ENCODE measurements at regions of chr2 and their contacts with region 1.

Region 1: DNA sequence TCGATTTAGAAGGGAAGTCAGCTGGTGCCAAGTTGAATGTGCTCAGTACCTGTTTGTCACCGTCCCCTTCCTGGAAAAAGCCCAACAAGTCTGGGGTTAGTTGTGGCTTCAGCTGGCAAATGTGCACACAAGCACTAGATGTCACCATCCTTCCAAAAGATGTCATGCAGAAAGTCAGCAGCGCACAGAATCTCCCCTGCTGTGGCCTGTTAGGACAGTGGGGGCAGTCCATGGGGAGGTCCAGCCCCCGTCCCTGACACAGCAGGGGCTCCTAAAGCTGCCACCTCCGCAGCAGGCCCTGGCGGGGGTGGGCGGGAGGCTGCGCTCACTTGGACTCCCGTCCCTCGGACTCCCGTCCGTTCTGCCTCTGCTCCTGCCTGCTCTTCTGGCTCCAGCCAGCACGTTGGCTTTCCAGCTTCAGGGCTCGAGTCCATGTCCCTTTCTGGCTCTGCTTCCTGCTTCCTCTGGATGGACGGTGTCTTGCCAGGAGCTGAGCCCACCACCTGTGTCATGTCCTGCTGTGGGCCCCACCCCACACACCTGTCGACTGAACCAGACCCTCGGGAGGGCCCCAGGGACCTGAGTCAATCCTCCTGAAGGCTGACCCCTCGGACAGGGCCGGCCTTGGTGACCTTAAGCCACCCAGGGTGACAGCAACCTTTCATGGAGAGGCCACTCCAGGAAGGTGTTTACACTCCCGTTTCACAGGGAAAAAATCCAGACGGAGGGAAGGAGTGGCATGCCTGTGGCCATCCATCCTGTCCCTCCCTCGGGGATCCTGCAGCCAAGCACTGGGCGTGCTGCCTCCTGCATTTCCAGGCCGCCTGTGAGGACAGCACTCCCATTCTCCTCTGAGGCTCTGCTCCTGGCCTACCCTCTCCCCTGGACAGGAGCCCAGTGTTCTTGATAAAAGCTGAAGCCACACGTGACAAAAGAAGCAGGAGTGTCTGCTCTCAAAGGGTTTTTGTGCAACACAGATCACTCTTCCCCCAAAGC is 8.5 kb downstream of the RAB17 start:
- DNase-seq: peak in 1 of 2 donors; percentile 71
- ATAC-seq: peak; percentile 15 to 73 (median 73)
- H3K4me3 ChIP-seq: no peak overlapping the region
- H3K4me3 Mint-ChIP-seq: no peak overlapping the region
- H3K27ac ChIP-seq: no peak overlapping the region
- H3K27ac Mint-ChIP-seq: no peak overlapping the region
- H3K4me1 ChIP-seq: no peaks in the 10 kb centered on the region
- H3K4me1 Mint-ChIP-seq: no peaks in the 10 kb centered on the region
- H3K27me3 ChIP-seq: no peaks in the 10 kb centered on the region
- H3K27me3 Mint-ChIP-seq: peaks cover 0 to 4% of the 10 kb centered on the region in 2 donors
- CTCF ChIP-seq: no peak

Region 2: DNA sequence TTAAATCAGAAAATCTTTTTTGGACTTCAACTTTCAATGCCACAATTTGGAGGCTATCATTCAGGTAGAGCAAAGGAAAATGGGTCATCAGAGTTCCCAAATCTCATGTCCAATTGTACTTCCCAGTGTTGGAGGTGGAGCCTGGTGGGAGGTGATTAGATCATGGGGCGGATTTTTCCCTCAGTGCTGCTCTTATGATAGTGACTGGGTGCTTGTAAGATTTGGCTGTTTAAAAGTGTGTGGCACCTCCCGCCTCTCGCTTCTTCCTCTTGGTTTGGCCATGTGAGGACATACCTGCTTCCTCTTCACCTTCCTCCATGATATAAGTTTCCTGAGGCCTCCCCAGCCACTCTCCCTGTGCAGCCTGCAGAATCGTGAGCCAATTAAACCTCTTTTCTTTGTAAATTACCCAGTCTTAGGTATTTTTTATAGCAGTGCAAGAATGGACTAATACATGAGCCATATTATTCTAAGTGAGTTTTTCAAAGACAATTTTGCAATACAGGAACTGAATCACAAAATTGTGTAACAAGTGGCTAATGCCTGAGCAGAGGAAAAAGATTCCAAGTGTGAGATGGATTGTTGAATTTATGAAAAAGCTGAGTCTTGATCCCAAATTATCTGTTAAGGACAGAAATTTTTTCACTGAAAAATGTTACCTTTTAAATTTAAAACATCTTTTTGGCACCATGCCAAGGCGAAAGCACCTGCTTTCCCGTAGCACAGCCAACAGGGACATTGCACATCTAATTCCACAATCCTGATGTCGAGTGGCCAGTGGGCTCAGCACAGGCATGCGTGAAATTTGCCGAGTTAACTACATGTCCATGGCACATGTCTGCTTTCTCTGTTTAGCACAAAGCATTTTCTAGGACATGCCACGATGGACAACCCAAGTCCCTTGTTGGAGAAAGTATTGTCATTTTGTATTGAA is 318.9 kb before region 1 on chr2:
- intact Hi-C with region 1: no loop called
- DNase-seq: no peak
- ATAC-seq: no peak
- H3K4me3 ChIP-seq: no peak overlapping the region
- H3K4me3 Mint-ChIP-seq: no peak overlapping the region
- H3K27ac ChIP-seq: no peak overlapping the region
- H3K27ac Mint-ChIP-seq: no peak overlapping the region
- H3K4me1 ChIP-seq: no peaks in the 10 kb centered on the region
- H3K4me1 Mint-ChIP-seq: no peaks in the 10 kb centered on the region
- H3K27me3 ChIP-seq: no peaks in the 10 kb centered on the region
- H3K27me3 Mint-ChIP-seq: peaks cover 4 to 15% of the 10 kb centered on the region in 2 donors
- CTCF ChIP-seq: no peak

Region 3: GRCh38 chr2:237540823-237541222 is 41.2 kb before region 1 on chr2:
- intact Hi-C with region 1: no loop called
- DNase-seq: no peak
- ATAC-seq: no peak
- H3K4me3 ChIP-seq: no peak overlapping the region
- H3K4me3 Mint-ChIP-seq: no peak overlapping the region
- H3K27ac ChIP-seq: no peak overlapping the region
- H3K27ac Mint-ChIP-seq: no peak overlapping the region
- H3K4me1 ChIP-seq: no peaks in the 10 kb centered on the region
- H3K4me1 Mint-ChIP-seq: no peaks in the 10 kb centered on the region
- H3K27me3 ChIP-seq: no peaks in the 10 kb centered on the region
- H3K27me3 Mint-ChIP-seq: peaks cover 0 to 4% of the 10 kb centered on the region in 2 donors
- CTCF ChIP-seq: no peak

Region 4: GRCh38 chr2:237744613-237745249 is 162.7 kb after region 1 on chr2:
- intact Hi-C with region 1: loop called (anchors 1 kb)
- DNase-seq: peak; percentile 75 to 86
- ATAC-seq: peak; percentile 77 to 89 (median 86)
- H3K4me3 ChIP-seq: no peak overlapping the region
- H3K4me3 Mint-ChIP-seq: no peak overlapping the region
- H3K27ac ChIP-seq: peak overlapping the region; percentile 31
- H3K27ac Mint-ChIP-seq: peak overlapping the region; percentile 76 to 86
- H3K4me1 ChIP-seq: peaks cover 13% of the 10 kb centered on the region
- H3K4me1 Mint-ChIP-seq: peaks cover 30 to 40% of the 10 kb centered on the region in 2 donors
- H3K27me3 ChIP-seq: no peaks in the 10 kb centered on the region
- H3K27me3 Mint-ChIP-seq: no peaks in the 10 kb centered on the region
- CTCF ChIP-seq: peak; percentile 98

Measured in natural killer cell (primary cell).